ENCODE measurements at regions of chr16 and their contacts with region 1.

Region 1: DNA sequence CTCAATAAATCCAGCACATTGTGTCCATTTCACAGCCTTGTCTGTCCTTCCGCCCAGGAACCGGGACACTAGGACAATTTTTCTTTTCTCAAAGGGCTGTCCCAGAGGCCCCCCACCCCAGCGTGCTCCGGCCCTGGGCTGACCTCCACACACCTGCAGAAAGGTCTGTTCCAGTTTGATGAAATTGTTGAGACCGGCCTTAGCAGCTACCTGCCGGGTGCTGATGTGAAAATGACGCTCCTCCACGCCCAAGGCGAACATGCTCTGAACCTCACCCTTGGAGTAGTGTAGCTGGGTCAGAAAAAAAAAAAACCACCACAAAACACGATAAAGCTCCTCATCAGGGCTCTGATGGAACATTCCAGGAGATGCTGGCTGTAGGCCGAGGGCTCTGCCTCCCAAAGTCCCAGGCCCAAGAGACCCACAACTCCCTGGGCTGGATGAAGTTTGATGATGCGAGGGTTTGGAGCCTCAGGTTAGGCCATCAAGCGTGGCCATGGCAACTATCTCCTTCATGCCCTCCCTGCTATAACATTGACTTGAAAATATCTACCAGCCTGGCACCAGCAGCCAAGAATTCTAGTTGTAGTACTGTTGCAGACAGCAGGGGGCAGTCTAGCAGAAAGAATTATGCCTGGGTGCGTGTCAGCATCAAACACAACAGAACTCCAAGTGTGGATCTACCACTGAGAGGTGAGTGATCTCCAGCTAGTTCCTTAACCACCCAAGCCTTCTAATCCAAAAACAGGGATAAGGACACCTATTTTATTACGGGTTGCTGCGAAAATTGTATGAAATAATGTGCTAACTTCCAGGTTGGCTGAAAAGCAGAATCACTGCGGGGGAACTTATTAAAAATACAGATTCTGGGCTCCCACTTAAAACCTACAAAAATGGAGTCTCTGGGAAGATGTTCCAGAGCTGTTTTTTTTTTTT is 62.1 kb downstream of the RMI2 start:
- DNase-seq: no peak
- ATAC-seq: peak; percentile 74
- H3K4me3 Mint-ChIP-seq: no peak overlapping the region
- H3K27ac Mint-ChIP-seq: no peak overlapping the region
- H3K4me1 Mint-ChIP-seq: no peaks in the 10 kb centered on the region
- H3K27me3 Mint-ChIP-seq: no peaks in the 10 kb centered on the region
- CTCF ChIP-seq: no peak

Region 2: DNA sequence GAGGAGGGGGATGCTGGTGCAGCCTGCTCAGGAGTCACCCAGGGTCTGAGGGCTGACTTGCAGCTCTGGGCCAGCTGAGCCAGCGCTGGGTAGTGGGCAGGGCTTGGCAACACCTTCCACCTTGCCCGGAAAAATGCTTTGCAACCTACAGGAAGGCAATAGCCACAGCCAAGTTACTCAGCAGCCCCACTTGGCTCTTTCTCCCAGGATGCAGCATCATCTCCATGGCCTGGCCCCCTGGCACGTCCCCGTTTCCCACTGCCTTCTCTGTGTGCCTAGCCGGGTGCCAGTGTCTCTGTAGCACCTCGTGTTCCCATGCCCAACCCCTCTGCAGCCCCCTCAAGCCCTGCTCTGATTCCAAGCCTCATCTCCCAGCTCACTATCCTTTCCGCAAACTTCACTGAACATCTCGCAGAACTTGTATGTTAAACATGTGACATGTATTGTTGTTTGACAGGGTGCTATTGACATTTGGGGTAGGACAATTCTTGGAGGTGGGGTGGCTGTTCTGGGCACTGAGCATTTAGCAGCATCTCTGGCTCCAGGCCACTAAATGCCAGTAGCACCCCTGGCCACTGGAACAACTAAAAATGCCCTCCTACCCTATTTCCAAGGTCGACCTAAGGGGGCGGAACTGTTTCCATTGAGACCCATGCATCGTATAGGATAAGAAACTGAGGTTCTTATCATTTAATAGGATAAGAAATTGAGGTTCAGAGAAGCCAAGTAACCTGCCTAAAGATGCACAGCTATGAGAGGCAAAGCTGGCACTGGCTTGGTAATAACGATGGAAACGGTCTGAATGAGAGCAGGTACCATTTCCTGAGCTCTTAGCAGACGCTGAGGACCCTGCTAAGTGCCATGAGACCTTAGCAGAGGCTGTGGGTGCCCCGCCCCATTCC is 477.2 kb before region 1 on chr16:
- CTCF ChIA-PET with region 1: no interaction called
- POLR2A ChIA-PET with region 1: no interaction called
- intact Hi-C with region 1: no loop called
- DNase-seq: no peak
- ATAC-seq: peak; percentile 14
- H3K4me3 Mint-ChIP-seq: peak overlapping the region; percentile 5
- H3K27ac Mint-ChIP-seq: peak overlapping the region; percentile 71
- H3K4me1 Mint-ChIP-seq: peaks cover 54% of the 10 kb centered on the region
- H3K27me3 Mint-ChIP-seq: no peaks in the 10 kb centered on the region
- CTCF ChIP-seq: no peak

Region 3: DNA sequence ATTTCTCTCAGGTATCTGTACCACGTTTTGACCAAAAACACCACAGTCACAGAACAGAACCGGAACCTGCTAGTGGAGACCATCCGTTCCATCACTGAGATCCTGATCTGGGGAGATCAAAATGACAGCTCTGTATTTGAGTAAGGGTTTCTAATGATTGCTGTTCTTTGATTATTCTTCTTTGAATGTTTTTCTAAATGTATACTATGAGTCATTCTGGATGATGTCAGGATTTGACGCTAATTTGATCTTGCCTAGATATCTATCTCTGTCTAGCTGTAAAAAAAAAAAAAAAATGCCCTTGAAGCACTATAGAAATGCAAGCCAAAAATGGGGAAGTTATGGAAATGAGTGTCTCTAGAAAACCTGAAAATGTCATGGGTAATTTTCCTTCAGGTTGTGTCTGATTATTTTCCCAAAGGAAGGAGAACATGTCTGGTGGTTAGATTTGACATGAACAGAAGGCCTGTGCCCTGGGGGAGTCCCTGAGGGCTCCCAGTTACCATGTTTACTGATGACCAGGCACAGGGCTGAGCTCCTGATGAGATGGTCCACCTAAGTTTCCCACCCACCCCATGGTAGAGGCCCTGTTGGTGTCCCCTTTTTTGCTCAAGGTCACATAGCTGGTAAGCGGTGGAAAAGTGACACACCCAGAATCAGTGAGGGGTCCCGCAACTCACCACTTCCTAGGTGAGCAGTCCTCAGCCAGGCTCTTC is 449.4 kb before region 1 on chr16:
- CTCF ChIA-PET with region 1: interaction called, 46 read pairs
- POLR2A ChIA-PET with region 1: no interaction called
- intact Hi-C with region 1: loop called (anchors 2 kb)
- DNase-seq: no peak
- ATAC-seq: peak; percentile 61
- H3K4me3 Mint-ChIP-seq: peak overlapping the region; percentile 42
- H3K27ac Mint-ChIP-seq: peak overlapping the region; percentile 59
- H3K4me1 Mint-ChIP-seq: peaks cover 67% of the 10 kb centered on the region
- H3K27me3 Mint-ChIP-seq: no peaks in the 10 kb centered on the region
- CTCF ChIP-seq: no peak

Region 4: DNA sequence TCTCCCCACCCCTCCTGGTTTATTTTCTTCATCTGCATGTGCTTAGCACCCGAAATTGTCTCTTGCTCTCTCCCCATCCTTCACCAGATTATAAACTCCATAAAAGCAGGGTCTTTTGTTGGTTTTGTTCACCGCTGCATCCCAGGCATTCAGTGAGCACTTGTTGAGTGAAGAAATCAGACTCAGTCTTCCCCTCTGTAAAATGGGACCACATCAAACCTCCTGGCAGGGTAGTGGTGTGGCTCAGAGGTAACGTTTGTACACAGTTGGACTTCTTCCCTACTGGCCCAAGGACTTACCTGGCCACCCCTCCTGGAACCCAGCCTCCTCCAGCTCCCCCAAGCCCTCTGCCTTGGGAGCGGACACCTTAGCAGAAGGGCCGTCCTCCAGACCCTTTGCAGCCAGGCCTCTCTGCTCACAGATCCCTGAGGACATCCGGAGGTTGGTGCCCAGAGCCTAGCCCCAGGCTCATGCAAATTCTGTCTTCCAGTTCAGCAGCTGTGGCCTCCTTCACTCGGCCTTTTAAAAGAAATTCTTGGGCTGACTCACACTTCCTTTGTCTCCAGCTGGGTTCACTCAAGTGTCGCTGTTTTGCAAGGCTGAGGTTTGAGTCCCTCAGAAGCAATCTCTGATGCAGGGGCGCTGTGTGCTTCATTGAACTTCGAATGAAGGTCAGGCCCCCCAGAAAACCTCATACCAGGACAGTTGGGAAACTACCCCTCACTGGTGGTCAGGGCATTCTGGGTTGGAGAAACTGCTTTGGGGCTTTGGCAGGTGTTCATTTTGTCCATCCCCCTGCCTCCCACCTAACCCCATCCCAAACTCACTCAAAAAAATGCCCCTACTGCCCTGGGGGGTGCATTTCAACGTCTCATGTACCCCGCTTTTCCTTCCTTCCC is 78.9 kb before region 1 on chr16:
- CTCF ChIA-PET with region 1: no interaction called
- POLR2A ChIA-PET with region 1: no interaction called
- intact Hi-C with region 1: no loop called
- DNase-seq: peak; percentile 66
- ATAC-seq: peak; percentile 65
- H3K4me3 Mint-ChIP-seq: peak overlapping the region; percentile 80
- H3K27ac Mint-ChIP-seq: peak overlapping the region; percentile 94
- H3K4me1 Mint-ChIP-seq: peaks cover 72% of the 10 kb centered on the region
- H3K27me3 Mint-ChIP-seq: no peaks in the 10 kb centered on the region
- CTCF ChIP-seq: no peak

Region 5: GRCh38 chr16:11423315-11424117 is 16.2 kb after region 1 on chr16:
- CTCF ChIA-PET with region 1: no interaction called
- POLR2A ChIA-PET with region 1: no interaction called
- intact Hi-C with region 1: no loop called
- DNase-seq: no peak
- ATAC-seq: peak; percentile 90
- H3K4me3 Mint-ChIP-seq: no peak overlapping the region
- H3K27ac Mint-ChIP-seq: no peak overlapping the region
- H3K4me1 Mint-ChIP-seq: peaks cover 9% of the 10 kb centered on the region
- H3K27me3 Mint-ChIP-seq: no peaks in the 10 kb centered on the region
- CTCF ChIP-seq: no peak

Region 6: DNA sequence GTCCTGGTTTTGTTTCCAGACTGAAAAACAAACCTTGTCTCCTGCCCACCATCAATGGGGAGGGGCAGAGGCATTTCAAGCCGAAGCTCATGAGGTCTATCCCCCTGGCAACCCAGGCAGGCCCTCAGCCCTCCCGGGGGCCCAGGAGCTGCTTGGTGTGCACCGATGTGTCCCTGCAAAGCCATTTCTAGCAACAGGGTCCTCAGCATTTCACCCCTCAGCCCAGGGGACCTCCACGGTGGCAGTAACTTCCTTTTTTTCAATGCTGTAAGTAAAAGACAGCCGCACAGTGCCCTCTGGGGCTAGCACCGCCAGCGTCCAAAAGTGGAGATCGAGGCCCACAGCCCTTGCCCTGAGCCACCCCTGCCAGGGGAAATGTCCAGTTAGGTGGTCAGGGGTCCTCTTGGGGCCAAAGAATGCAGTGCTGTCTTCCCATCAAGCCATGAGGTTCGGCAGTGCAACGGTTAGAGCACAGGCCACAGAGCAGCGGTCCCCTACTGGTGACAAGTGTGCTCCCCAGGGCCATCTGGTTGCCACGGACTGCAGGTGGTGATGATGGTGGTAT is 99.5 kb after region 1 on chr16:
- CTCF ChIA-PET with region 1: interaction called, 14 read pairs
- POLR2A ChIA-PET with region 1: no interaction called
- intact Hi-C with region 1: loop called (anchors 1 kb)
- DNase-seq: peak; percentile 48
- ATAC-seq: peak; percentile 87
- H3K4me3 Mint-ChIP-seq: peak overlapping the region; percentile 76
- H3K27ac Mint-ChIP-seq: peak overlapping the region; percentile 74
- H3K4me1 Mint-ChIP-seq: peaks cover 13% of the 10 kb centered on the region
- H3K27me3 Mint-ChIP-seq: no peaks in the 10 kb centered on the region
- CTCF ChIP-seq: no peak

Region 7: GRCh38 chr16:11535471-11535870 is 128.2 kb after region 1 on chr16:
- CTCF ChIA-PET with region 1: interaction called, 25 read pairs
- POLR2A ChIA-PET with region 1: no interaction called
- intact Hi-C with region 1: loop called (anchors 1 kb)
- DNase-seq: no peak
- ATAC-seq: no peak
- H3K4me3 Mint-ChIP-seq: no peak overlapping the region
- H3K27ac Mint-ChIP-seq: no peak overlapping the region
- H3K4me1 Mint-ChIP-seq: no peaks in the 10 kb centered on the region
- H3K27me3 Mint-ChIP-seq: no peaks in the 10 kb centered on the region
- CTCF ChIP-seq: no peak

Region 8: DNA sequence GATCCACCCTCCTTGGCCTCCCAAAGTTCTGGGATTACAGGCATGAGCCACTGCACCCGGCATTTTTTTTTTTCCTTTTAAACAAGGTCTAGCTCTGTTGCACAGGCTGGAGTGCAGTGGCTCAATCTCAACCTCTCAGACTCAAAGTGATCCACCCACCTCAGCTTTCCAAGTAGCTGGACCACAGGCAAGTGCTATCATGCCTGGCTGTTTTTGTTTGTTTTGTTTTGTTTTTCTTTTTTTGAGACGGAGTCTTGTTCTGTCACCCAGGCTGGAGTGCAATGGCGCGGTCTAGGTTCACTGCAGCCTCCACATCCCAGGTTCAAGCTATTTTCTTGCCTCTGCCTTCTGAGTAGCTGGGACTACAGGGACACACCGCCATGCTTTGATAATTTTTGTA is 408.8 kb after region 1 on chr16:
- CTCF ChIA-PET with region 1: interaction called, 6 read pairs
- POLR2A ChIA-PET with region 1: interaction called, 5 read pairs
- intact Hi-C with region 1: loop called (anchors 1 kb)
- DNase-seq: no peak
- ATAC-seq: no peak
- H3K4me3 Mint-ChIP-seq: no peak overlapping the region
- H3K27ac Mint-ChIP-seq: no peak overlapping the region
- H3K4me1 Mint-ChIP-seq: peaks cover 3% of the 10 kb centered on the region
- H3K27me3 Mint-ChIP-seq: no peaks in the 10 kb centered on the region
- CTCF ChIP-seq: no peak

Measured in activated B cell treated with CpG ODN at 0.5 μM for 24 hours (primary cell).